ENCODE measurements at regions of chr11 and their contacts with region 1.

Region 1: GRCh38 chr11:66459138-66459778 is 7.4 kb upstream of the PELI3 start:
- H3K4me3 Mint-ChIP-seq: no peak overlapping the region
- H3K27ac Mint-ChIP-seq: peak overlapping the region; percentile 79
- H3K4me1 Mint-ChIP-seq: peaks cover 46% of the 10 kb centered on the region
- H3K27me3 Mint-ChIP-seq: peaks cover 9% of the 10 kb centered on the region

Region 2: DNA sequence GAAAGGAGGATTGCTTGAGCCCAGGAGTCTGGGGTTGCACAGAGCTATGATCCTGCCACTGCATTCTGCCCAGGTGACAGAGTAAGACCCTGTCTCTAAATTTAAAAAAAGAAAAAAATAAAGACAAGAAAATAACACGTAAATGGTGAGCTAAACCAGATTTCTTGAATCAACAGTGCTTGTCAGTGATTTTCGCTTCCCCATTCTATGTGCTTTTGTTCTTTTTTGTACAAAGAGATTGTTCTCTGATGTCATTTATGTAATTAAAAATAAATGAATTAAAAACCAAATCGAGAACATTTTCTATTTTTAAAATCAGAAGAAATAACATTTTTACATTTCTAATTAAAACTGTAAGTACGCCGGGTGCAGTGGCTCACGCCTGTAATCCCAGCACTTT is 67.9 kb before region 1 on chr11:
- intact Hi-C with region 1: no loop called
- H3K4me3 Mint-ChIP-seq: no peak overlapping the region
- H3K27ac Mint-ChIP-seq: no peak overlapping the region
- H3K4me1 Mint-ChIP-seq: no peaks in the 10 kb centered on the region
- H3K27me3 Mint-ChIP-seq: peaks cover 24% of the 10 kb centered on the region

Region 3: DNA sequence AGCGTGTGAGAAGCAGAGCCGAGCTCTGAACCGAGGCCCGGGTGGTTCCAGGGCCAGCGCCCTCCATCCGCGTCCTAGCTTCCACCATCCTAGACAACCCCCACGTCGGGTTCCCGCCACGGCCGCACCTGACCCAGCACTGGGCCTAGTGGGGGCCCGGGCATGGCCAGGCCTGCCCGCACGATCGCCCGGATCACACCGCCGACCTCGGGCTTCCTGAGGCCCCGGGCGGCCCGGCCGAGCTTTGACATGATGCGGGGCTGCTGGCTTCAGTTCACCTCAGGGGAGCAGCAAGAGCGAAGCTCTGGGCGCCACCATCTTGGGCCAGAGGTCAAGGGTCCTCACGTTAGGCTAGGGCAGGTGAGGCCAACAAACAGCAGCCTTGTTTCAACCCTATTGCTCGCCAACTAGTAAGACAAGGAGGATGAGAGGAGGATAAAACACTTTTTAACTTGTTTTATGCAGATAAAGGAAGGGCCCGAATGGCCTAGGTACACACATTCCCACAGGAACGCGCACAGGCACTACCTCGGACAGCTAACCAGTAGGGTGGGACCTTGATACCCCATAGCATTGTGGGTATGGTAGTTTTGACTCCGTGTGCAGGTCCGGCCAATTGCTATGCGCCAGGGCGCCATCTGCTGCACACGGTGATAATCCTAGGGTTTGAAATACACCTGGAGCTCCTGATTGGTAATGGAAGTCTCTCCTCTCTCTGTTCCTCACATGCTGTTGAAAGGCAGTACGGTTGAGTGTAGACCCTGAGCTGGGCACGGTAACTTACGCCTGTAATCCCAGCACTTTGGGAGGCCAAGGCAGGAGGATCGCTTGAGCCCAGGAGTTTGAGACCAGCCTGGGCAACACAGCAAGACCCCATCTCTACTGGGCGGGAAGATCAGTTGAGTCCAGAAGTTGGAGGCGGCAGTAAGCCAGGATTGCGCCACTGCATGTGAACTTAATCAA is 20.5 kb before region 1 on chr11 and contains the start of gene MRPL11:
- intact Hi-C with region 1: loop called (anchors 2 kb)
- H3K4me3 Mint-ChIP-seq: peak within 1 kb of the TSS; percentile 87
- H3K27ac Mint-ChIP-seq: peak within 1 kb of the TSS; percentile 97
- H3K4me1 Mint-ChIP-seq: peaks cover 21% of the 10 kb centered on the region
- H3K27me3 Mint-ChIP-seq: no peaks in the 10 kb centered on the region

Measured in dendritic cell treated with granulocyte-macrophage colony-stimulating factor and Interleukin-4, amounts not matched to agents 40 ng/mL and 50 ng/mL, for 4 days (primary cell).